ENCODE measurements at regions of chr12 and their contacts with region 1.

Region 1: GRCh38 chr12:113980537-113981337 is 14.6 kb upstream of the RBM19 start:
- DNase-seq: peak; percentile 50
- ATAC-seq: peak; percentile 87
- H3K4me3 Mint-ChIP-seq: no peak overlapping the region
- H3K27ac Mint-ChIP-seq: no peak overlapping the region
- H3K4me1 Mint-ChIP-seq: no peaks in the 10 kb centered on the region; the same call in 1 of the 2 replicates
- H3K27me3 Mint-ChIP-seq: peaks cover 14% of the 10 kb centered on the region
- CTCF ChIP-seq: peak; percentile 93

Region 2: GRCh38 chr12:113273053-113273725 is 707.5 kb before region 1 on chr12:
- CTCF ChIA-PET with region 1: no interaction called
- POLR2A ChIA-PET with region 1: no interaction called
- DNase-seq: no peak
- ATAC-seq: peak; percentile 56
- H3K4me3 Mint-ChIP-seq: no peak overlapping the region
- H3K27ac Mint-ChIP-seq: no peak overlapping the region; the same call in 1 of the 2 replicates
- H3K4me1 Mint-ChIP-seq: no peaks in the 10 kb centered on the region
- H3K27me3 Mint-ChIP-seq: no peaks in the 10 kb centered on the region
- CTCF ChIP-seq: no peak

Region 3: GRCh38 chr12:113837528-113838296 is 143.0 kb before region 1 on chr12:
- CTCF ChIA-PET with region 1: no interaction called
- POLR2A ChIA-PET with region 1: no interaction called
- DNase-seq: no peak
- ATAC-seq: no peak
- H3K4me3 Mint-ChIP-seq: no peak overlapping the region
- H3K27ac Mint-ChIP-seq: no peak overlapping the region; the same call in 1 of the 2 replicates
- H3K4me1 Mint-ChIP-seq: peaks cover 3% of the 10 kb centered on the region; the same call in 1 of the 2 replicates
- H3K27me3 Mint-ChIP-seq: no peaks in the 10 kb centered on the region
- CTCF ChIP-seq: no peak

Region 4: GRCh38 chr12:113889076-113889475 is 91.7 kb before region 1 on chr12:
- CTCF ChIA-PET with region 1: no interaction called
- POLR2A ChIA-PET with region 1: no interaction called
- DNase-seq: no peak
- ATAC-seq: peak; percentile 24; the same call in 1 of the 2 replicates
- H3K4me3 Mint-ChIP-seq: no peak overlapping the region
- H3K27ac Mint-ChIP-seq: no peak overlapping the region
- H3K4me1 Mint-ChIP-seq: peaks cover 16% of the 10 kb centered on the region
- H3K27me3 Mint-ChIP-seq: no peaks in the 10 kb centered on the region
- CTCF ChIP-seq: no peak

Region 5: GRCh38 chr12:113996026-113996425 is 15.3 kb after region 1 on chr12:
- CTCF ChIA-PET with region 1: interaction called, 79 read pairs
- POLR2A ChIA-PET with region 1: no interaction called
- DNase-seq: peak; percentile 62
- ATAC-seq: peak; percentile 100
- H3K4me3 Mint-ChIP-seq: no peak overlapping the region
- H3K27ac Mint-ChIP-seq: no peak overlapping the region
- H3K4me1 Mint-ChIP-seq: peaks cover 5% of the 10 kb centered on the region; the same call in 1 of the 2 replicates
- H3K27me3 Mint-ChIP-seq: peaks cover 18% of the 10 kb centered on the region
- CTCF ChIP-seq: no peak

Region 6: DNA sequence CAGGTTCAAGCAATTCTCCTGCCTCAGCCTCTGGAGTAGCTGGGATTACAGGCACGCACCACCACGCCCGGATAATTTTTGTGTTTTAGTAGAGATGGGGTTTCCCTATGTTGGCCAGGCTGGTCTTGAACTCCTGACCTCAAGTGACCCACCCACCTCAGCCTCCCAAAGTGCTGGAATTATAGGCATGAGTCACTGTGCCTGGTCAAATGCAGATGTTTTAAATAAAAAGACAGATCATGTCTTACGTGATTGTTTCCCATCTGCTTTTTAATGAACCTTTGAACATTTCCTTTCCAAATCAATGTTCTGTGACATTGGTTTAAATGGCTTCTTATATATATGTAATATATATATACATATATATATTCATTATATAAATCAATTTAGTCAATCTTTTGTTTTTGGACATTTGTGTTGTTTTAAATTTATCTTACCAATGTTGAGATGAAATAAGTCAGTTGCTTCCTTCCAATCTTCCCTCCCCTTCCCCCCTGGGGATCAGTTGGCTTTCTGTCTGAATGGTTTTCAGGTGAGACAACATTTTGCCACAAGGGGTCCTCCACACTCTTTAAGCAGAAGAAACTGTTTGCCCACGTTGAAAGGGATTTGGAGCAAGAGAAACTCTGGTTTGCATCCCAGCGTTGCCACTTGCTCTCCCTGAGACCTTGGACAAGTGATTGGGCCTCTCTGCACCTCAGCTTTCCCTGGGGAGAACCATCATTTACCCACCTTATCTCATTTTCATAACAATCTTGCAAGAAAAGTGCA is 33.0 kb after region 1 on chr12:
- CTCF ChIA-PET with region 1: interaction called, 10 read pairs
- POLR2A ChIA-PET with region 1: no interaction called
- DNase-seq: peak; percentile 52
- ATAC-seq: peak; percentile 80
- H3K4me3 Mint-ChIP-seq: no peak overlapping the region
- H3K27ac Mint-ChIP-seq: no peak overlapping the region
- H3K4me1 Mint-ChIP-seq: 0 out of 2 replicates have a peak, but pooled peaks cover 3% of the 10 kb centered on the region
- H3K27me3 Mint-ChIP-seq: peaks cover 8% of the 10 kb centered on the region
- CTCF ChIP-seq: no peak

Region 7: GRCh38 chr12:114123108-114123507 is 142.4 kb after region 1 on chr12:
- CTCF ChIA-PET with region 1: no interaction called
- POLR2A ChIA-PET with region 1: no interaction called
- DNase-seq: no peak
- ATAC-seq: peak; percentile 90
- H3K4me3 Mint-ChIP-seq: no peak overlapping the region
- H3K27ac Mint-ChIP-seq: no peak overlapping the region
- H3K4me1 Mint-ChIP-seq: peaks cover 17% of the 10 kb centered on the region
- H3K27me3 Mint-ChIP-seq: peaks cover 18% of the 10 kb centered on the region
- CTCF ChIP-seq: no peak

Region 8: GRCh38 chr12:114166362-114166761 is 185.6 kb after region 1 on chr12:
- CTCF ChIA-PET with region 1: interaction called, 29 read pairs
- POLR2A ChIA-PET with region 1: interaction called, 3 read pairs
- DNase-seq: peak; percentile 66
- ATAC-seq: peak; percentile 85
- H3K4me3 Mint-ChIP-seq: no peak overlapping the region
- H3K27ac Mint-ChIP-seq: no peak overlapping the region
- H3K4me1 Mint-ChIP-seq: peaks cover 11% of the 10 kb centered on the region
- H3K27me3 Mint-ChIP-seq: peaks cover 49% of the 10 kb centered on the region
- CTCF ChIP-seq: peak; percentile 68; the same call in 1 of the 2 replicates

Region 9: DNA sequence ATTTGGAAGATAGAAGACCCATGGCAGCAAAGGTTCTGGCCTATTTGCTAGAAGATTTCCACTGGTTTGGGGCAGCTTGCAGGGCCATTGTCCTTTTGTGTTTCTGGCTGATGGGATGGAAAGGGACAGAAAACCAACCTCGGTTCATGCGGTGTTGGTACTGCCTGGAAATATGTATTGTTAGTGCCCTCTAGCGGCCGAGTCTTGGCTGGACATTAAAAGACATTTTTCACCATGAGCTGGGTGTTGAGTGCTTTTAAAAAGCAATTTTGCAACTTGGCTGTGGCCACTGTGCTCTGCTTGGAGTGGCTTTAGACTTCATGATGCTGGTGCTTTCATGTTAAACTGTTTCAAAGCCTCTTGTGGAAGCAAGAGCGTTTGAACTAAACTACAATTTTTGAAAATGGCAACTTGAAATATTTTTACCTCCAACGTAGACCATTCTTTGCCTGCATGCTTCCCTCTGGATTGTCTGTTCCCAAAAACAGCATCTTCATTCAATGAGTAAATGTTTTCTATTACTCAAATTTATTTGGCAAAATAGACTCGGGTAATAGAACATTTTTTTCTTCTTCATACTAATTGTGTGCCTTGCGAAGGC is 527.9 kb after region 1 on chr12:
- CTCF ChIA-PET with region 1: interaction called, 35 read pairs
- POLR2A ChIA-PET with region 1: no interaction called
- DNase-seq: peak; percentile 80
- ATAC-seq: peak; percentile 81
- H3K4me3 Mint-ChIP-seq: no peak overlapping the region
- H3K27ac Mint-ChIP-seq: no peak overlapping the region
- H3K4me1 Mint-ChIP-seq: no peaks in the 10 kb centered on the region
- H3K27me3 Mint-ChIP-seq: peaks cover 23% of the 10 kb centered on the region
- CTCF ChIP-seq: peak; percentile 68

Region 10: DNA sequence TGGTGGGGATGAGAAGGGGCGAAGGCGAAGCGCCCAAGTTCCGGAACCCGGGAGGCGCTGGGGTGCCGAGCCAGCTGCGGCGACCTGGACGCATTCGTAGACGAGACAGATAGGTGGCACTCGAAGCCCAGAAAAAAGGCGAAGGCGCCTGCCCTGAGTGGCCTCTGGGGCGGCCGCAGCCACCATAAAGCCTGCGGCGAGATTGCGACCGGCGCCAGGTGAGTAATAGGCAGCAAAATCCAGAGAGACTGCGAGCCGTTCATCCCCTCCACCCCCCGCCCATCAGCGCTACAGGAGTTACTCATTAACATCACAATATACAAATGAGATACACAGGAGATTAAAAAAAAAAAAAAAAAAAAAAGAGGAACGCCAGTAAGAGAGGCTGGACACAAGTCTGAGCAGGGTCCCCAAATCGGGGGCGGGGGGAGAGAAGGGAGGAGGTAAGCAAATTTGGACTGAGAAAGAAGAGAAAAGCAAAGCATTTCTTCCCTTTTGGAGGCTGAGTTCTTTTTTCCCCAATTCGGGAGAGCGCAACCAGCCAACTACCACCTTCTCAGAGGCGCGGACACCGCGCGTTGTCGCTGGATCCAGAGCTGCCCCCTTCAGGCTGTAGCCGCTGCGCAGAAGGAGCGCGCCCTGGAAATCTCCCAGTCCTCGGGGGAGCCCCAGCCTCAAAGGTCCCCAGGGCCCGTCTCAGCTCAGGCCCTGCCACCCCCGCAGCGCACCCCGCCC is 687.6 kb after region 1 on chr12:
- CTCF ChIA-PET with region 1: interaction called, 12 read pairs
- POLR2A ChIA-PET with region 1: no interaction called
- DNase-seq: peak; percentile 85
- ATAC-seq: peak; percentile 49
- H3K4me3 Mint-ChIP-seq: peak overlapping the region; percentile 68
- H3K27ac Mint-ChIP-seq: no peak overlapping the region
- H3K4me1 Mint-ChIP-seq: peaks cover 61% of the 10 kb centered on the region
- H3K27me3 Mint-ChIP-seq: peaks cover 100% of the 10 kb centered on the region
- CTCF ChIP-seq: no peak

Measured in WTC11 (cell line).